ENCODE measurements at regions of chr7 and their contacts with region 1.

Region 1: GRCh38 chr7:155298834-155299534 is 1.3 kb downstream of the INSIG1 start:
- H3K4me3 ChIP-seq: peak overlapping the region; percentile 61
- H3K27ac ChIP-seq: peak overlapping the region; percentile 82
- H3K4me1 ChIP-seq: peaks cover 3% of the 10 kb centered on the region; the same call in 1 of the 2 replicates
- CTCF ChIP-seq: no peak

Region 2: GRCh38 chr7:154744256-154744860 is 554.6 kb before region 1 on chr7:
- CTCF ChIA-PET with region 1: no interaction called
- POLR2A ChIA-PET with region 1: no interaction called
- H3K4me3 ChIP-seq: no peak overlapping the region
- H3K27ac ChIP-seq: no peak overlapping the region
- H3K4me1 ChIP-seq: no peaks in the 10 kb centered on the region
- CTCF ChIP-seq: no peak

Region 3: DNA sequence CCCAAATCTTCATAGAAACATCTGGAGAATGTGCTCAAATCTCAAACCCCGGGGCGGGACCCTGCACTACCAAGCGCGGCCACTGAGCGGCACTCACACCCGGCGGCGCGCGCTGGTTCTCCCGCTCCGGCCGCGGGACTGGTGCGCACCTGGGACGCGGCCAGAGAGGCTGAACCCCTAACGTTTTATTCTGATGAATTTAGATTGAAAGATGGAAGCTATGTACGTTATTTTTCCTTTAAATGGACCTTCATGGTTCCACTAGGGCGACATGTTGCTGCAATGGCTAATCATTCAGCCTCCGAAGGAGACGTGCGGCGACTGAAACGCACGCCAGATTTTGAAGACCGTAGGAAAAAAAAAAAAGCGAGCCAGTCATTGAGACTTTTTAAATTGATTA is 108.3 kb before region 1 on chr7:
- CTCF ChIA-PET with region 1: interaction called, 5 read pairs
- POLR2A ChIA-PET with region 1: interaction called, 11 read pairs
- H3K4me3 ChIP-seq: no peak overlapping the region
- H3K27ac ChIP-seq: no peak overlapping the region
- H3K4me1 ChIP-seq: no peaks in the 10 kb centered on the region
- CTCF ChIP-seq: peak; percentile 54; the same call in 1 of the 2 replicates

Region 4: GRCh38 chr7:155205368-155206317 is 93.3 kb before region 1 on chr7:
- CTCF ChIA-PET with region 1: no interaction called
- POLR2A ChIA-PET with region 1: interaction called, 16 read pairs
- H3K4me3 ChIP-seq: peak overlapping the region; percentile 38
- H3K27ac ChIP-seq: peak overlapping the region; percentile 61
- H3K4me1 ChIP-seq: no peaks in the 10 kb centered on the region
- CTCF ChIP-seq: no peak

Region 5: GRCh38 chr7:155230168-155230593 is 68.8 kb before region 1 on chr7:
- CTCF ChIA-PET with region 1: no interaction called
- POLR2A ChIA-PET with region 1: interaction called, 13 read pairs
- H3K4me3 ChIP-seq: no peak overlapping the region
- H3K27ac ChIP-seq: no peak overlapping the region
- H3K4me1 ChIP-seq: no peaks in the 10 kb centered on the region
- CTCF ChIP-seq: no peak

Region 6: GRCh38 chr7:155287304-155287935 is 11.6 kb before region 1 on chr7:
- CTCF ChIA-PET with region 1: no interaction called
- POLR2A ChIA-PET with region 1: interaction called, 15 read pairs
- H3K4me3 ChIP-seq: no peak overlapping the region
- H3K27ac ChIP-seq: no peak overlapping the region
- H3K4me1 ChIP-seq: no peaks in the 10 kb centered on the region
- CTCF ChIP-seq: no peak

Region 7: GRCh38 chr7:155310425-155311114 is 11.6 kb after region 1 on chr7:
- CTCF ChIA-PET with region 1: no interaction called
- POLR2A ChIA-PET with region 1: no interaction called
- H3K4me3 ChIP-seq: no peak overlapping the region
- H3K27ac ChIP-seq: no peak overlapping the region
- H3K4me1 ChIP-seq: no peaks in the 10 kb centered on the region
- CTCF ChIP-seq: no peak